Mammary epithelial cell (primary cell): ENCODE measurements at regions of chr2 and their contacts with region 1.

Region 1: DNA sequence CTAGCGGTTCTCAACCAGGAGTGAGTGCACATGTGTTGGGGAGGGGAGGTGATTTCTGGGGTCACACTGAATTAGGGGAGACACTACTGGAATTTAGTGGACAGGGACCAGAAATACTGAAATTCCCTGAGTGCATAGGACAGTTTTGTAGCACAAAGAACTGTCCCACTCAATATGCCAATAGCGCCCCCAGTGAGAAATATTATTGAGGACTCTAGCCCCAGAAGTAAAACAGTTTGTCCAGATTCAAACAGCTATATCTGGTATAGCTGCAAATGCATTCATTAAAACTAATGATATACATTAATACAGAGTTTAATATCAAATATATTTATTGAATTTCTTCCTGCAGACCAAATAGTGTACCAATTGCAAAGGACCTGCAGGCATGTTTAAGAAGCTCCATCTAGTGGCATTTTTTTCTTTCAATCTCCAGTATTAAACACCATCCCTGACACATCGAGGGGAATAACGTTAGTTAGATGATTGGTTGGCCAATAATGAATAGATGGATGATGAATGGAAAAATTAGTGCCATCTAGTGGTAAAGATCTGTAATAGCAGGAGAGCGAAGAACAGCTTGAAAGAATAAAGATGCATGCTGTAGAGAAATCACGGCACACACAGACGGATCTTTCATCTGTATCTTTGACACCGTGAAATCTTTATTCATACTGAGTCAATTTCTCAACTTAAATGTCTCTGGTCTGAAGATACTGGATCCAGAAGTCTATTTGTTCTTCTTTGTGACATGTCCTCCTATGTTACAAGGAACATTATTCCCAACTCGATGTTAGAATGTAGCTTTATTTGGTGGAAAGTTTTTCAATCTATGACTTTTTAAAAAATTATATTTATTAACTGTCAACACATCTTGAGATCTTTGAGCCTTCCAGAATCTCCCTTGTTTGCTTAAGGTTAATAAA is 62.5 kb downstream of the DHRS9 start:
- DNase-seq: peak; percentile 80
- H3K4me3 ChIP-seq: no peak overlapping the region
- H3K27ac ChIP-seq: no peak overlapping the region
- H3K4me1 ChIP-seq: no peaks in the 10 kb centered on the region
- H3K27me3 ChIP-seq: no peaks in the 10 kb centered on the region
- CTCF ChIP-seq: peak; percentile 72 to 78

Region 2: DNA sequence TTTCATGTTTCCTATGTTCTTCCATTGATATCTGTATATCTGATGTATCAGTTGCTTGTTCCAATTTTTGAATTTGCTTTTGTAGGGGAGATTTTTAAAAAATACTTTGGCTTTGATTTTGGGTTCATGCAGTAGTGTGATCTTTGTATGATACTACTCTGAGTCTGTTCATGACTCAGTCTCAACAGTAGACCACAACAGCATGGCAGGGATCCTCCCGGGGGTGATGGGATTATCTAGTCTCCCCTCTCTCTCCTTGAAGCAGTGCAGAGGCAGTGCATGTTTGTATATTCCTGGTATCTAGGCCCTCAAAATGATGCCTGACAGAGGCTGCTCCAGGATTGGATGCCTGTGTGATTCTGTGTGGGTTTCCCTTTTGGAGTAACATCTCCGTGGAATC is 175.5 kb before region 1 on chr2:
- CTCF ChIA-PET with region 1: no interaction called
- dilution Hi-C with region 1: no loop called
- in situ Hi-C with region 1: loop called (anchors 10 kb)
- intact Hi-C with region 1: loop called (anchors 1 kb)
- DNase-seq: no peak
- H3K4me3 ChIP-seq: no peak overlapping the region
- H3K27ac ChIP-seq: no peak overlapping the region
- H3K4me1 ChIP-seq: no peaks in the 10 kb centered on the region
- H3K27me3 ChIP-seq: peaks cover 1% of the 10 kb centered on the region
- CTCF ChIP-seq: no peak